ENCODE measurements at regions of chr2 and their contacts with region 1.

Region 1: DNA sequence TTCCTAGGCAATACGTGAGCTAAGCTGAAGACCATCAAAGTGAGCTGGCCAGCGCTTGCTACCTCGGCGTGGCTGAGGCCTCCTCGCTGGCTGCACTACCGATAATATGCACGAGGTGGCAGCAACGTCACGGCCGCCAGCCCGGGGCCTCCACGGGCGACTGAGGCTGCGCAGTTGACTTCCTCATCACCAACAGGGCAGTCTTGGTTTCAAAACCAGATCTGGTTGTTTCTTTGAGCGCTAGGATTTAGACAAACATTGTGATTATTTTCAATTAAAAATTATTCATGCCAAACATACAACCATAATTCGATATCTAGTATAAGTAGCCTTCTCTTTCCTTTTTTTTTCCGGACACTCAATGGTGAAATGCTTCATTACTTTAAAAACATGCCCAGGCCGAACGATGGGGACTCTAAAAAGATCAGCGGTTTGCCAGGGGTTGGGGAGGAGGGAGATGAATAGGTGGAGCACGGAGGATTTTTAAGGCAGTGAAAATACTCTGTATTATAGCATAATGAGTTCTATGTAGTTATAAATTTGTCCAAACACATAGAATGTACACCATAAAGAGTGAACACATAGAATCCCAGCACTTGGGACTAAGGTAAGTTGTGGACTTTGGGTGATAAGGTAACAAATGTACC is 52.0 kb downstream of the CYBRD1 start:
- DNase-seq: peak; percentile 62 to 87 (median 78)
- ATAC-seq: peak; percentile 100
- H3K4me3 ChIP-seq: no peak overlapping the region
- H3K4me3 Mint-ChIP-seq: peak overlapping the region; percentile 42
- H3K27ac ChIP-seq: no peak overlapping the region
- H3K27ac Mint-ChIP-seq: no peak overlapping the region
- H3K4me1 ChIP-seq: no peaks in the 10 kb centered on the region
- H3K4me1 Mint-ChIP-seq: peaks cover 6% of the 10 kb centered on the region
- H3K27me3 ChIP-seq: no peaks in the 10 kb centered on the region
- H3K27me3 Mint-ChIP-seq: peaks cover 2% of the 10 kb centered on the region
- CTCF ChIP-seq: peak; percentile 97

Region 2: DNA sequence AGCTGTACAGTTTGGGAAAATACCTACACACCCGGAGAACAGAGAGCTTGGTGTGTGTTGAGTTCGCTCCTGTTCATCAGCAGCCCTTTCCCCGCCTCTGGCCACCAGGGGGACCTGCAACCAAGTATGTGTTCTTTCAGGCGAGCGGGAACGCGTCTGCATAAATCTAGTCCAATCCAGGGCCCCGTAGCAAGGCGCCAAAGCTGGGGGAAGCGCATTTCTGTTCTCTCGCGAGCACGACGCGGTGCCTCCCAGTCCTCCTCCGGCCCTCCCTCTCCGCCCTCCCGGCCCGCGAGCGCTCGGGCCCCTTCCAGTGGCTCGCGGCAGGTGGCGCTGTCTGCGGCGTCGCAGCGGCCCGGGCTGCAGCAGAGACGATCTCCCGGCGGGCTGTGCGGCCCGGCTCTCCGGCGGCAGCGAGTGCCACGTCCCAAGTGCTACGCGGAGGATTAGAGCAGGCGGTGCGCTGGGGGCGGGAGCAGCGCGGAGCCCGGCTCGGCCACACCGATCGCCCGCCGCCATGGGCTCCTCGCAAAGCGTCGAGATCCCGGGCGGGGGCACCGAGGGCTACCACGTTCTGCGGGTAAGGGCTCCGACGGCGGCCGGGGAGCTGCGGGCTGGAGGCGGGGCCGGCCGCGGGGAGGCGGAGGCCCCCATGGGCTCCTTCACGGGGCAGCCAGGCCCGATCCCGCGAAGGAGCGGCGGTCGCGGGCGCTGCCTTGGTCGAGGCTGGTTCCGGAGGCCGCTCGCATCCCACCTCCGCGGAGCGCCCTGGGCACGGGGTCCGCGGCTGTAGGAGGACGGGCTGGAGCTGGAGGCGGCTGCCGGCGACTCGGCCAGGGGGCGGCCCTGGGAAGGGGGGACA is 645.2 kb before region 1 on chr2 and contains the start of gene GORASP2:
- CTCF ChIA-PET with region 1: no interaction called
- POLR2A ChIA-PET with region 1: no interaction called
- intact Hi-C with region 1: no loop called
- DNase-seq: peak; percentile 93 to 100 (median 97)
- ATAC-seq: peak; percentile 90
- H3K4me3 ChIP-seq: peak within 1 kb of the TSS; percentile 78 to 92
- H3K4me3 Mint-ChIP-seq: peak within 1 kb of the TSS; percentile 98
- H3K27ac ChIP-seq: peak within 1 kb of the TSS; percentile 68 to 80
- H3K27ac Mint-ChIP-seq: peak within 1 kb of the TSS; percentile 97
- H3K4me1 ChIP-seq: peaks cover 30% of the 10 kb centered on the region
- H3K4me1 Mint-ChIP-seq: peaks cover 35% of the 10 kb centered on the region
- H3K27me3 ChIP-seq: no peaks in the 10 kb centered on the region
- H3K27me3 Mint-ChIP-seq: no peaks in the 10 kb centered on the region
- CTCF ChIP-seq: peak; percentile 93
- total RNA-seq, gene GORASP2: 111 to 112 TPM

Region 3: GRCh38 chr2:171342067-171342413 is 232.2 kb before region 1 on chr2:
- CTCF ChIA-PET with region 1: no interaction called
- POLR2A ChIA-PET with region 1: no interaction called
- intact Hi-C with region 1: no loop called
- DNase-seq: no peak
- ATAC-seq: no peak
- H3K4me3 ChIP-seq: no peak overlapping the region
- H3K4me3 Mint-ChIP-seq: no peak overlapping the region
- H3K27ac ChIP-seq: no peak overlapping the region
- H3K27ac Mint-ChIP-seq: no peak overlapping the region
- H3K4me1 ChIP-seq: no peaks in the 10 kb centered on the region
- H3K4me1 Mint-ChIP-seq: peaks cover 6% of the 10 kb centered on the region
- H3K27me3 ChIP-seq: no peaks in the 10 kb centered on the region
- H3K27me3 Mint-ChIP-seq: no peaks in the 10 kb centered on the region
- CTCF ChIP-seq: no peak

Region 4: DNA sequence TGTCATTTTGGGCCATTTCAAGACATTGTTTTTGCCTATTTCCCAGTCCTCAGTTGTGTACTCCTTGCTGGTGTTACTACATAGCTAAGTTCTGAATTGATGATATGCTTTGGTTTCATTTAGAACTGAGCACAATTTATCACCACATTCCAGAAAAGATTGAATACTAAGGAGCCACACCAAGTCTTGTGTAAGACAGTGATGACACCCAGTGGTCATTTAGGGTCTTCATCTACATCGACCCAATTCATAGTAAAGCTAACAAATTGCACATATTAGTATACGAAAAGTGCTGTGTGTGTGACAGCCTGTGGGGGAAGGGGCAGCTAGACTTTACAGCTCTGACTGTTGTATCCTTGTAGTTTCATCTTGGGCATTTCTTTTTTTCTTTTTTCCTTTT is 539.3 kb after region 1 on chr2:
- CTCF ChIA-PET with region 1: no interaction called
- POLR2A ChIA-PET with region 1: no interaction called
- intact Hi-C with region 1: loop called (anchors 2 to 10 kb)
- DNase-seq: peak in 1 of 9 experiments; percentile 46
- ATAC-seq: no peak
- H3K4me3 ChIP-seq: no peak overlapping the region
- H3K4me3 Mint-ChIP-seq: no peak overlapping the region
- H3K27ac ChIP-seq: no peak overlapping the region
- H3K27ac Mint-ChIP-seq: no peak overlapping the region
- H3K4me1 ChIP-seq: no peaks in the 10 kb centered on the region
- H3K4me1 Mint-ChIP-seq: no peaks in the 10 kb centered on the region
- H3K27me3 ChIP-seq: peaks cover 0 to 3% of the 10 kb centered on the region in 2 experiments
- H3K27me3 Mint-ChIP-seq: peaks cover 34% of the 10 kb centered on the region
- CTCF ChIP-seq: no peak

Region 5: DNA sequence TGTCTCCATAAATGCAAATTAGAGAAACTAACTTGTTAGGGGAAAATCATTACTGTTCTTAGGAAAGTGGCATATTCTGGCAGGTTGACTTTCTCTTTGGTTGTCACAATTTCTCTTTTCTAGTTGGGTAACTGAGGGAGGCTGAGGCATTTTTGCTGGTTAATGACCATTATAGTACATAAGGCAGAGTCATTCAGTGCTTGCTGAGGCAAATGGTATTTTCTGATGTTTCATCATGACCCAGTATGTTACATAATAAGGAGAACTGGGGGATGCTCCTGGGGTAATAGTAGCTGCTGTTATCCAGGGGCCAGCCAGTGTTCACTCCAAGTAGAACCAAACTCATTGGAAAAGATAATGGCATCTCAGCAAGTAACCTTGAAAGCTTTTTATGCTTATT is 915.4 kb after region 1 on chr2:
- CTCF ChIA-PET with region 1: no interaction called
- POLR2A ChIA-PET with region 1: no interaction called
- intact Hi-C with region 1: loop called in 1 of 2 experiments (anchors 5 kb)
- DNase-seq: no peak
- ATAC-seq: no peak
- H3K4me3 ChIP-seq: no peak overlapping the region
- H3K4me3 Mint-ChIP-seq: no peak overlapping the region
- H3K27ac ChIP-seq: no peak overlapping the region
- H3K27ac Mint-ChIP-seq: peak overlapping the region; percentile 96
- H3K4me1 ChIP-seq: peaks cover 41% of the 10 kb centered on the region
- H3K4me1 Mint-ChIP-seq: peaks cover 67% of the 10 kb centered on the region
- H3K27me3 ChIP-seq: no peaks in the 10 kb centered on the region
- H3K27me3 Mint-ChIP-seq: no peaks in the 10 kb centered on the region
- CTCF ChIP-seq: no peak